Gastrocnemius medialis (tissue), 4 donors: ENCODE measurements at regions of chr15 and their contacts with region 1.

Region 1: GRCh38 chr15:100627789-100628395 is 25.5 kb downstream of the ASB7 start:
- DNase-seq: peak; percentile 35 to 50
- ATAC-seq: peak; percentile 83 to 91
- H3K4me3 ChIP-seq: no peak overlapping the region
- H3K27ac ChIP-seq: no peak overlapping the region
- H3K4me1 ChIP-seq: peaks cover 7 to 9% of the 10 kb centered on the region in 2 donors
- H3K27me3 ChIP-seq: no peaks in the 10 kb centered on the region
- CTCF ChIP-seq: peak; percentile 78 to 82 (median 81)
- POLR2A ChIP-seq: no peak

Region 2: DNA sequence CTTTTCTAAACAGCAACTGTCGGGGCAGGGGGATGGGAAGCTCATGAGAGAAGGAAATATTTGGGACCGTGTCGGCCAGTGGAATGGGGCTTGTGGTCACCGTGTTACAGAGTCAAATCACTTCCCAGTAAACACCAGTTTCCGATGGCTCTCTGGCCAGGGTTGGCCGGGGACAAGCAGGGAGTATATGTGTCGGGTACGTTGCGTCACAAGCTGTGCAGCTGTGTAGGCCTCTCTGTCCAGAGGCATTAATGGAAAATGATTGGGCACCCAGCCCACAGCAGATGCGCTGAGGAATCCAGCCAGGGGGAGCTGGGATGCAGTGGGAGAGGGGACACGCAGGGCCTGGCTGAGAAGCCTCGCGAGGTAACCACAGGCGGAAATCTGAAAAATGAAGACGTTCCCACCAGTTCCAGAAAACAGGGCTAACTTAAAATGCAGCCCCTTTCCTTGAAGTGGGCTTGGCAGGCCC is 235.9 kb after region 1 on chr15:
- in situ Hi-C with region 1: loop called in 1 of 4 experiments (anchors 5 kb)
- intact Hi-C with region 1: no loop called
- DNase-seq: peak; percentile 19 to 69
- ATAC-seq: peak; percentile 56 to 60
- H3K4me3 ChIP-seq: no peak overlapping the region
- H3K27ac ChIP-seq: peak overlapping the region in 2 of 4 donors; percentile 11 to 33
- H3K4me1 ChIP-seq: no peaks in the 10 kb centered on the region
- H3K27me3 ChIP-seq: peaks cover 7 to 18% (median 14%) of the 10 kb centered on the region in 3 donors
- CTCF ChIP-seq: no peak
- POLR2A ChIP-seq: no peak

Region 3: DNA sequence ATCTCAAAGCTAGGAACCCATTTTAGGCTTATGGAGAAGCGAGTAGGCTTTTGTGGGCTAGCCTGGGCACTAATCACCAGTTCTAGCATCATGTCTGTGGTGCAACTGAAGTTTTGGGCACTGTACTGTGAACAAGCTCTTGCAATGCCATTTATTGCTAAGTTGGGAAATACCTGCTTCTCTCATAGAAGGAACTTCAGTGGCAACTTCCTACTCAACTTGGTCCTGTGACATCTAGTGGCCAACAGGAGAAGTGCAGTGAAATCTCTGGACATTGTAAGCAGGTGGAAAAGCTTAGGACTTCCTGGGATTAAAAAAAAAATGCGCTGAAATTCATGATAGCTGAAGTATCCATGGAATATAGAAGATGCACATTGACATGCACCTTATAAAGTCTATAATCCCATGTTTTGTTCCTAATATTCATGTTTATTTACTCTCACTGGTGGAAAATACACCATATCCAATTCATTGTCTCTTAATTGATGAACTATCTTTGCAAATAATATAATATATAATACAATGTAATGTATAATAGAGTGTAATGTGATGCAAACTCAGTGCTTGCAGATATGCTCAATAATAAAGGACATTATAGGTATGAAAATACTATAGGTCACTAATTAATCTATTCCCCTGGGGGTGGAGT is 245.3 kb after region 1 on chr15:
- in situ Hi-C with region 1: loop called in 2 of 4 experiments (anchors 5 to 10 kb)
- intact Hi-C with region 1: loop called (anchors 1 kb)
- DNase-seq: peak in 1 of 2 donors; percentile 60
- ATAC-seq: peak; percentile 77 to 96
- H3K4me3 ChIP-seq: no peak overlapping the region
- H3K27ac ChIP-seq: no peak overlapping the region
- H3K4me1 ChIP-seq: no peaks in the 10 kb centered on the region
- H3K27me3 ChIP-seq: peaks cover 0 to 5% (median 0%) of the 10 kb centered on the region in 3 donors
- CTCF ChIP-seq: peak; percentile 83 to 95 (median 89)
- POLR2A ChIP-seq: no peak

Region 4: GRCh38 chr15:101000271-101000681 is 372.4 kb after region 1 on chr15:
- in situ Hi-C with region 1: loop called (anchors 5 to 10 kb)
- intact Hi-C with region 1: no loop called
- DNase-seq: no peak
- ATAC-seq: no peak
- H3K4me3 ChIP-seq: no peak overlapping the region
- H3K27ac ChIP-seq: no peak overlapping the region
- H3K4me1 ChIP-seq: no peaks in the 10 kb centered on the region
- H3K27me3 ChIP-seq: no peaks in the 10 kb centered on the region
- CTCF ChIP-seq: no peak
- POLR2A ChIP-seq: no peak

Region 5: DNA sequence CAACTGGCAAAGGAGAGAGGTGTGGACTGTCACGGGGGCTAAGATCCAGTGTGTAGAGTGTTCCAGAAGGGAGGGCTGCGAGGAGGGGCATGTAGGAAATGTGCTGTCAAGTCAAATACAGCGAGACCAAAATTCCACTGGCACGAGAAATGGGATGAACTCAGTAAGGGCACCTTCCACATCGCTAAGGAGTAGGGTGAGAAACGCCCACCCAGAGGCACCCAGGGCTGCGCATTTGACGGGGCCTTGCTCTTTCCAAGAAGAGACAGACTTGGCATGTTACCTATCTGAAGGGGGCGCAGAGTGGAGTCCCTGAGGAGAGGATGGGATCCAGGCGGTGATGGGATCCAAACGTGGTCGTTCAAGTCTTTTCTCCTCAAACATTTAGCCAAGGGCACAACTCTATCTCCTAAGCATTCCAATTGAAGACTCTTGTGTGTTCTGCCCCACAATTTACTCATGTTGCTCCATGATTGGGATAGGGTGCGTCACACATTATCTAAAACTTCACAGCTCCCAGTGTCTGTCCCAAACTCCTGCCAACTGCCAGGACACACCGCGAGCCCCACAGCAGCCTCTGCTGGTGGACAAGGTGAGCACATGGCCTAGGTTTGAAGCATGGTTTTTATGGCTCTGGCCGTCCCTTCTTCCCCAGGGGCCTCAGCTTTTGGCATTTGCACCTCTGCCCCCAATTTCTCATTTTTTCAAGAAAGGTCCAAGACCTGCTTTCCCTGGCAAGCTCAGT is 641.8 kb after region 1 on chr15:
- in situ Hi-C with region 1: loop called (anchors 10 to 25 kb)
- intact Hi-C with region 1: no loop called
- DNase-seq: no peak
- ATAC-seq: no peak
- H3K4me3 ChIP-seq: no peak overlapping the region
- H3K27ac ChIP-seq: no peak overlapping the region
- H3K4me1 ChIP-seq: peaks cover 17 to 43% of the 10 kb centered on the region in 2 donors
- H3K27me3 ChIP-seq: no peaks in the 10 kb centered on the region
- CTCF ChIP-seq: peak in 2 of 5 experiments; percentile 10 to 16
- POLR2A ChIP-seq: no peak